ENCODE measurements at regions of chr2 and their contacts with region 1.

Region 1: GRCh38 chr2:40101131-40101575 is 322.1 kb upstream of the THUMPD2 start:
- DNase-seq: no peak
- ATAC-seq: peak in 2 of 8 donors; percentile 25 to 39
- H3K4me3 ChIP-seq: no peak overlapping the region
- H3K27ac ChIP-seq: peak overlapping the region in 3 of 10 donors; percentile 12 to 41 (median 25)
- H3K4me1 ChIP-seq: peaks cover 0 to 51% (median 24%) of the 10 kb centered on the region in 9 donors
- H3K27me3 ChIP-seq: no peaks in the 10 kb centered on the region
- CTCF ChIP-seq: no peak

Region 2: GRCh38 chr2:40130251-40130994 is 29.3 kb after region 1 on chr2:
- intact Hi-C with region 1: loop called in 1 of 10 experiments (anchors 1 kb)
- DNase-seq: peak; percentile 46 to 61
- ATAC-seq: peak; percentile 79 to 92 (median 90)
- H3K4me3 ChIP-seq: no peak overlapping the region
- H3K27ac ChIP-seq: peak overlapping the region; percentile 20 to 86 (median 78)
- H3K4me1 ChIP-seq: peaks cover 4 to 78% (median 52%) of the 10 kb centered on the region in 9 donors
- H3K27me3 ChIP-seq: no peaks in the 10 kb centered on the region
- CTCF ChIP-seq: no peak

Measured in heart right ventricle (tissue), 16 donors.